ENCODE measurements at regions of chr12 and their contacts with region 1.

Region 1: DNA sequence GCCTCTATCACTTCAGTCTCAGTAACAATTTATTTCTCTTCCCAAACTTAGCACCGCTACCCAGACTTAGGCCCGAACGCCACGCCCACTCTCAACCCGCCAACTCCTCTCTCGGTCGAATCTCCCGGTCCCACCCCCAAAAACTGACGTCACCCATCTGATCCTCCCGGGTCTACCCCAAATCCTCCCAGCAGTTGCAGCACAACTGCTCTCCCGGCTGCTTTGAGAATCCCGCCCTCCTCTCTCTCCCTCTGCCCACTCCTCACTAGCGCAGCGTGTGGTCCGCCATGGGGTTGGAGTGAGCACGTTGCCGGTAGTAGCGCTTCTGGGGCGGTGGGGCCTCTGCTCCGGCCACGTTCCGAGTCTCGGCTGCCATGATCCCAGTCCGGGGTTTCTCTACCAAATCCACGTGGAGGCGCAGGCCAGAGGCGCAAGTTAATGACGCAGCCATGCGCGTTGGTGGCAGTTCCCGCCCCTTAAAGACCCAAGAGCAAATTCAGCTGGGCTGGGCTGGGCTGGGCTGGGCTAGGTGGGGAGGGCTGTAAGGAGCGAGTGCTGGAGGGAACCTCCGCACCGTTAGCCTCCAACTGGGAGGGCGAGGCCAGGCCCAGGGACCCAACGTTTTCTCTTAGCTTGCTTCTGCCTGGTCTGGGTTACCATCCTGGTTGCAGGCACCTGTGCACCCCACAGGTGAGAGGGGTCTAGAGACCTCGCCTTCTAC is at the start of gene METTL1:
- DNase-seq: peak; percentile 93 to 99 (median 97)
- H3K4me3 ChIP-seq: peak within 1 kb of the TSS; percentile 25 to 94 (median 54)
- H3K27ac ChIP-seq: peak within 1 kb of the TSS; percentile 61 to 94 (median 93)
- H3K4me1 ChIP-seq: peaks cover 15 to 19% of the 10 kb centered on the region in 2 donors
- H3K27me3 ChIP-seq: no peaks in the 10 kb centered on the region
- CTCF ChIP-seq: peak in 1 of 6 experiments; percentile 16
- POLR2A ChIP-seq: peak; percentile 53 to 75
- total RNA-seq, gene METTL1: 4.7 to 56.8 (median 22.6) TPM

Region 2: DNA sequence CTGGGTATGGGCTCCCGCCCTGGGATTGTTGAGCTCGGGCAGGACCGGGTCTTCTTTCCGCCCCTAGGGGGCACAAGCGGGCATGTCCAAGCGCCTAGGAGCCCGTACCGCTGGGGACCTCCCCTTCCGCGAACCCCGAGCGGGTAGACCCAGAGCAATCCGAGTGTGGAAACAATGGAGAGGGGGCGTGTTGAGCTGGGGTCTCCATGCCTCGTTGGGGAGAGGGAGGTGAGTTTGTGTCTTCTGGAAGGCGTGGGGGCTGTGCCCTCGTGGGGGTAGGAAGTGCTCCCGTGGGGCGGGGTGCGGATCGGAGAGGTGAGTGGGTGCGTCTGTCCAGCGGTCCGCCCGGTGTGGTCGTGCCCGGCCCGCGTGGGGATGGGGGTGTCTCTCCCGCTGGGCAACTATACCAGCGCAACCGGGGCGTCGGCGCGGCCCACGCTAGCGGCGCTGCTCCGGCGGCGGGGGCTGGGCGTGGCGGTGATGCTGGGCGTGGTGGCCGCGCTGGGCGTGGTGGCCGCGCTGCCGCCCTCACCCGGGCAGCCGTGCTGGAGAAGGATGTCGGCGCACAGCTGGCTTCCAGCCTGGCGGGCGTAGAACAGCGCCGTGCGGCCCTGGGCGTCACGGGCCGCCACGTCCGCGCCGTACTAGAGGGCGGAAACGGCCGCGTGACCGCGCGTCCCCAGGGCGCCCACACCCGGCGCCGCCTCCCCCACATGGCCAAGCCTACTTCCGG is 45.6 kb before region 1 on chr12:
- intact Hi-C with region 1: loop called in 1 of 2 experiments (anchors 5 kb)
- DNase-seq: peak; percentile 78 to 92 (median 85)
- H3K4me3 ChIP-seq: peak overlapping the region in 3 of 4 donors; percentile 17 to 85 (median 40)
- H3K27ac ChIP-seq: peak overlapping the region in 2 of 5 donors; percentile 57 to 85
- H3K4me1 ChIP-seq: peaks cover 14 to 19% of the 10 kb centered on the region in 2 donors
- H3K27me3 ChIP-seq: no peaks in the 10 kb centered on the region
- CTCF ChIP-seq: peak; percentile 53 to 73 (median 65)
- POLR2A ChIP-seq: peak in 1 of 2 donors; percentile 25